Endothelial cell of umbilical vein (primary cell): ENCODE measurements at regions of chr3 and their contacts with region 1.

Region 1: DNA sequence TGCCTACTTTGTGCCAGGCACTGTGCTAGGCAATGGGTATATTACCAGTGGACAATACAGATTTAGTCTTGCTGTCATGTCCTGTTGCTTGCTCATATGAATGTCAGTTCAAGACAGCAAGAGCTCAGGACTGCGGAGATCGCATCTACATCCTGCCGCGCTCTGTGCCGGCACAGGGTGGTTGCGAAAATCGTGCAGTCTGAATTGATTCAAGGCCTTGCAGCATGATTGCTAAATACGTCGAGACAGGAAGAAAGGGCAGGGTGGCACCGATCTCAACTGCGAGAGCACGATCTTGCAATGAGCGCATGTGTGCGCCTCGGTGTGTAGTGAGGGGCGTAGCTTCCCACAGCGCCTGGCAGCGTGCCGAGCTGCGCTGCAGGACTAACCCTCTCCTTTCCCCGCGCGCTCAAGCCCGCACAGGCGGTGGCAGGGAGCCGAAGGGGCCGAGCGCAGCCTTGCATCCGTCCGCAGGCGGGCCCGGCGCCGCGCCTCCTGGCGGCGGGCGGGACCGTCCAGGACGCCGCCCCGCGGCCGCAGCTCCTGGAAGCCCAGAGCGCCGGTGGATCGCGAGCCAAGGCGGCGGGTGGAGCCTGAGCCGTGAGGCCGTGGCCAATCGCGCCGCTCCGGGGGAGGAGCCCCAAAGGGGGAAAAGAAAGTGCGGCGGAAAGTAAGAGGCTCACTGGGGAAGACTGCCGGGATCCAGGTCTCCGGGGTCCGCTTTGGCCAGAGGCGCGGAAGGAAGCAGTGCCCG is at the start of gene IL1RAP:
- DNase-seq: peak; percentile 91
- H3K4me3 ChIP-seq: peak within 1 kb of the TSS; percentile 67 to 93 (median 87)
- H3K27ac ChIP-seq: peak within 1 kb of the TSS; percentile 45
- H3K4me1 ChIP-seq: peaks cover 6% of the 10 kb centered on the region
- H3K27me3 ChIP-seq: no peaks in the 10 kb centered on the region
- CTCF ChIP-seq: peak; percentile 48 to 77
- POLR2A ChIP-seq: no peak
- total RNA-seq, gene IL1RAP: 8.7 and 9.2 TPM in 2 replicates

Region 2: GRCh38 chr3:189961525-189962161 is 551.9 kb before region 1 on chr3:
- CTCF ChIA-PET with region 1: interaction called, 7 read pairs
- POLR2A ChIA-PET with region 1: interaction called, 4 read pairs
- dilution Hi-C with region 1: no loop called
- intact Hi-C with region 1: loop called (anchors 10 kb)
- DNase-seq: peak; percentile 89
- H3K4me3 ChIP-seq: no peak overlapping the region
- H3K27ac ChIP-seq: no peak overlapping the region
- H3K4me1 ChIP-seq: no peaks in the 10 kb centered on the region
- H3K27me3 ChIP-seq: no peaks in the 10 kb centered on the region
- CTCF ChIP-seq: peak; percentile 77 to 90
- POLR2A ChIP-seq: no peak

Region 3: GRCh38 chr3:190339130-190339529 is 174.5 kb before region 1 on chr3:
- CTCF ChIA-PET with region 1: no interaction called
- POLR2A ChIA-PET with region 1: no interaction called
- dilution Hi-C with region 1: no loop called
- intact Hi-C with region 1: loop called (anchors 5 kb)
- DNase-seq: peak; percentile 72
- H3K4me3 ChIP-seq: no peak overlapping the region
- H3K27ac ChIP-seq: peak overlapping the region; percentile 70
- H3K4me1 ChIP-seq: peaks cover 21% of the 10 kb centered on the region
- H3K27me3 ChIP-seq: no peaks in the 10 kb centered on the region
- CTCF ChIP-seq: no peak
- POLR2A ChIP-seq: no peak

Region 4: GRCh38 chr3:190585805-190586630 is 72.4 kb after region 1 on chr3:
- CTCF ChIA-PET with region 1: interaction called, 6 read pairs
- POLR2A ChIA-PET with region 1: no interaction called
- dilution Hi-C with region 1: no loop called
- intact Hi-C with region 1: loop called (anchors 2 kb)
- DNase-seq: peak; percentile 69
- H3K4me3 ChIP-seq: no peak overlapping the region
- H3K27ac ChIP-seq: peak overlapping the region; percentile 52
- H3K4me1 ChIP-seq: peaks cover 12% of the 10 kb centered on the region
- H3K27me3 ChIP-seq: no peaks in the 10 kb centered on the region
- CTCF ChIP-seq: no peak
- POLR2A ChIP-seq: no peak

Region 5: GRCh38 chr3:190701096-190701532 is 187.5 kb after region 1 on chr3:
- CTCF ChIA-PET with region 1: interaction called, 59 read pairs
- POLR2A ChIA-PET with region 1: no interaction called
- dilution Hi-C with region 1: no loop called
- intact Hi-C with region 1: loop called (anchors 1 kb)
- DNase-seq: peak; percentile 37
- H3K4me3 ChIP-seq: no peak overlapping the region
- H3K27ac ChIP-seq: no peak overlapping the region
- H3K4me1 ChIP-seq: no peaks in the 10 kb centered on the region
- H3K27me3 ChIP-seq: peaks cover 0 to 2% of the 10 kb centered on the region in 2 experiments
- CTCF ChIP-seq: peak; percentile 24 to 46
- POLR2A ChIP-seq: no peak

Region 6: GRCh38 chr3:191355406-191355805 is 841.8 kb after region 1 on chr3:
- CTCF ChIA-PET with region 1: no interaction called
- POLR2A ChIA-PET with region 1: no interaction called
- dilution Hi-C with region 1: no loop called
- intact Hi-C with region 1: no loop called
- DNase-seq: no peak
- H3K4me3 ChIP-seq: no peak overlapping the region
- H3K27ac ChIP-seq: no peak overlapping the region
- H3K4me1 ChIP-seq: peaks cover 76% of the 10 kb centered on the region
- H3K27me3 ChIP-seq: no peaks in the 10 kb centered on the region
- CTCF ChIP-seq: no peak
- POLR2A ChIP-seq: no peak